BJ (cell line): ENCODE measurements at regions of chr18 and their contacts with region 1.

Region 1: DNA sequence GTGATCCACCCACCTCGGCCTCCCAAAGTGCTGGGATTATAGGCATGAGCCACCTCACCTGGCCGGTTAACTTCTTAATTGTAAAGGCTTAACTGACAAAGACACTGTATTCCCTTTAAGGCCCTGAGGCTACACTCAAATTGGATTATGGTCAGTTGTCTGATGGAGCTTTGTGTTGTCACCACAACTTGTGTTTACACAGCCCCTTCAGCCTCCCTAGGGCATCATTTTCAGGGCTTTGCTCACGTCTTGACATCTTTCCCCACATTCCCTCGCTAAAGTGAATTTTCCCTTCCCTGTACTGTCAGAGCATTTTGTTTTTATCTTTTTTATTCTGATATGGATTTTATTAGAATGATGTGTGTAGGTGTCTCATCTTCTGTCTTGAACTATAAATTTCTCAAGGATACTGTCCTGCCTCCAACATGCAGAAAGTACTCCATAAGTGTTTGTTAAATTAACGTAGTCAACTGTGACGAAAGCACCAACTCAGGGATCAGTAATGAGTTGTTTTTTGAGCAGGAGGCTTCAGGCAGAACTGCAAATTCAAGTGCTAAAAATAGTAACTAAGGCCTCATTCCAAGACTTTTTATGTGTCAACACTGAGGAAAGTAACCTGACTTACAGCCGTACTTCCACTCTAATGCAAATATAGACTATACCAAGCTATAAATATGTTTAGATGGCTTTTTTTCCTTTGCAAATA is 77.1 kb upstream of the NARS1 start:
- DNase-seq: peak; percentile 40
- H3K4me3 ChIP-seq: no peak overlapping the region
- H3K27me3 ChIP-seq: no peaks in the 10 kb centered on the region
- CTCF ChIP-seq: no peak

Region 2: GRCh38 chr18:57648414-57648813 is 50.3 kb before region 1 on chr18:
- CTCF ChIA-PET with region 1: no interaction called
- POLR2A ChIA-PET with region 1: interaction called, 10 read pairs
- DNase-seq: no peak
- H3K4me3 ChIP-seq: no peak overlapping the region
- H3K27me3 ChIP-seq: no peaks in the 10 kb centered on the region
- CTCF ChIP-seq: no peak

Region 3: GRCh38 chr18:57730146-57730545 is 31.4 kb after region 1 on chr18:
- CTCF ChIA-PET with region 1: no interaction called
- POLR2A ChIA-PET with region 1: interaction called, 17 read pairs
- DNase-seq: no peak
- H3K4me3 ChIP-seq: no peak overlapping the region
- H3K27me3 ChIP-seq: no peaks in the 10 kb centered on the region
- CTCF ChIP-seq: no peak